ENCODE measurements at regions of chr6 and their contacts with region 1.

Region 1: GRCh38 chr6:131510094-131510493 is 62.9 kb upstream of the ARG1 start:
- DNase-seq: no peak
- H3K4me3 ChIP-seq: no peak overlapping the region
- H3K4me3 Mint-ChIP-seq: no peak overlapping the region
- H3K27ac Mint-ChIP-seq: no peak overlapping the region
- H3K4me1 ChIP-seq: 0 out of 2 replicates have a peak, but pooled peaks cover 10% of the 10 kb centered on the region
- H3K4me1 Mint-ChIP-seq: peaks cover 6% of the 10 kb centered on the region
- H3K27me3 ChIP-seq: no peaks in the 10 kb centered on the region
- H3K27me3 Mint-ChIP-seq: no peaks in the 10 kb centered on the region
- CTCF ChIP-seq: no peak

Region 2: DNA sequence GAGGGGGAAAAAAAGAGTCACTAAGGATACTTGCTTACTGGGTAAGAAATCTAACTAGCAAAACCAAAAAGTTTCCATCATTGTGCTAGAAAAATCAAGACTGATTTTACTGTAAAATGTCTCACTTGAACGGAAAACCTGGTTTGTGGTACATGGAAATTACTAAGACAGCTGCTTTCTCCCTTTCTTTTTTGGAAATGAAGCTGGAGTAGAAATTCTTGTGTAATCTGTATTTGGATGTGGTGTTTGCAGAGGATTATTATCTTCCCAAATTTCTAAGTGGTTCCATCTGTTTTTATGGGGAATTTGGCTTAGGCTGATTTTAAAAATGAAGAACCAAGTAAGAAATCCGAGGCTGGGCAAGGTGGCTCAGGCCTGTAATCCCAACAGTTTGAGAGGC is 467.4 kb before region 1 on chr6:
- CTCF ChIA-PET with region 1: no interaction called
- POLR2A ChIA-PET with region 1: interaction called, 11 read pairs
- intact Hi-C with region 1: no loop called
- DNase-seq: no peak
- H3K4me3 ChIP-seq: no peak overlapping the region
- H3K4me3 Mint-ChIP-seq: no peak overlapping the region
- H3K27ac Mint-ChIP-seq: no peak overlapping the region
- H3K4me1 ChIP-seq: 0 out of 2 replicates have a peak, but pooled peaks cover 6% of the 10 kb centered on the region
- H3K4me1 Mint-ChIP-seq: peaks cover 5% of the 10 kb centered on the region
- H3K27me3 ChIP-seq: no peaks in the 10 kb centered on the region
- H3K27me3 Mint-ChIP-seq: no peaks in the 10 kb centered on the region
- CTCF ChIP-seq: no peak

Region 3: GRCh38 chr6:131197716-131198115 is 312.4 kb before region 1 on chr6:
- CTCF ChIA-PET with region 1: no interaction called
- POLR2A ChIA-PET with region 1: no interaction called
- intact Hi-C with region 1: no loop called
- DNase-seq: no peak
- H3K4me3 ChIP-seq: no peak overlapping the region
- H3K4me3 Mint-ChIP-seq: no peak overlapping the region
- H3K27ac Mint-ChIP-seq: no peak overlapping the region
- H3K4me1 ChIP-seq: no peaks in the 10 kb centered on the region
- H3K4me1 Mint-ChIP-seq: no peaks in the 10 kb centered on the region
- H3K27me3 ChIP-seq: no peaks in the 10 kb centered on the region
- H3K27me3 Mint-ChIP-seq: no peaks in the 10 kb centered on the region
- CTCF ChIP-seq: no peak

Region 4: DNA sequence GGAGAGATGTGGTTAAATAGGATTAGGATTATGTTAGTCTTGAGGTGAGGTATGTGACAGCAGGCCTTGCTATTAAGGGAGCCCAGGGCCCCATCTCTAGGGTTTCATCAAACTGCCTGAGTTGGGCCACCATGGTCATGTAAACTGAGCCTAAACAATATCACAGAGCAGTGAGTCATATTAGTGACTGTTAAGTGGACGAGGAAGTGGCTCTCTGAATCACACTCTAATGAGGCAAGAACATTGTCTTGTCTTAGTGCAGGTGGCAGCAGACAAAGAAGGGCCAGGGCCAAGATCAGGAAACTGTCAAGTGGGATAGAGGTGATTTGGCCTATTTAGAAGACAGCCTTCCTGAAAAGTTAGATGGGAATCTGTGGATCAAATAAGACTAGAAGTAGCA is 150.1 kb after region 1 on chr6:
- CTCF ChIA-PET with region 1: no interaction called
- POLR2A ChIA-PET with region 1: no interaction called
- intact Hi-C with region 1: no loop called
- DNase-seq: no peak
- H3K4me3 ChIP-seq: no peak overlapping the region
- H3K4me3 Mint-ChIP-seq: no peak overlapping the region
- H3K27ac Mint-ChIP-seq: no peak overlapping the region
- H3K4me1 ChIP-seq: no peaks in the 10 kb centered on the region
- H3K4me1 Mint-ChIP-seq: no peaks in the 10 kb centered on the region
- H3K27me3 ChIP-seq: no peaks in the 10 kb centered on the region
- H3K27me3 Mint-ChIP-seq: no peaks in the 10 kb centered on the region
- CTCF ChIP-seq: no peak

Measured in Caco-2 (cell line).